Heart left ventricle (tissue), 16 donors: ENCODE measurements at regions of chr3 and their contacts with region 1.

Region 1: GRCh38 chr3:12719984-12720898 is 38.8 kb downstream of the TMEM40 start:
- DNase-seq: peak; percentile 70 to 82 (median 81)
- ATAC-seq: peak; percentile 92 to 98 (median 96)
- H3K4me3 ChIP-seq: peak overlapping the region in 10 of 12 donors; percentile 10 to 54 (median 40)
- H3K27ac ChIP-seq: peak overlapping the region in 6 of 12 donors; percentile 9 to 60 (median 32)
- H3K4me1 ChIP-seq: peaks cover 0 to 16% (median 4%) of the 10 kb centered on the region in 12 donors
- H3K27me3 ChIP-seq: no peaks in the 10 kb centered on the region
- CTCF ChIP-seq: peak; percentile 80 to 98 (median 90)
- POLR2A ChIP-seq: no peak

Region 2: DNA sequence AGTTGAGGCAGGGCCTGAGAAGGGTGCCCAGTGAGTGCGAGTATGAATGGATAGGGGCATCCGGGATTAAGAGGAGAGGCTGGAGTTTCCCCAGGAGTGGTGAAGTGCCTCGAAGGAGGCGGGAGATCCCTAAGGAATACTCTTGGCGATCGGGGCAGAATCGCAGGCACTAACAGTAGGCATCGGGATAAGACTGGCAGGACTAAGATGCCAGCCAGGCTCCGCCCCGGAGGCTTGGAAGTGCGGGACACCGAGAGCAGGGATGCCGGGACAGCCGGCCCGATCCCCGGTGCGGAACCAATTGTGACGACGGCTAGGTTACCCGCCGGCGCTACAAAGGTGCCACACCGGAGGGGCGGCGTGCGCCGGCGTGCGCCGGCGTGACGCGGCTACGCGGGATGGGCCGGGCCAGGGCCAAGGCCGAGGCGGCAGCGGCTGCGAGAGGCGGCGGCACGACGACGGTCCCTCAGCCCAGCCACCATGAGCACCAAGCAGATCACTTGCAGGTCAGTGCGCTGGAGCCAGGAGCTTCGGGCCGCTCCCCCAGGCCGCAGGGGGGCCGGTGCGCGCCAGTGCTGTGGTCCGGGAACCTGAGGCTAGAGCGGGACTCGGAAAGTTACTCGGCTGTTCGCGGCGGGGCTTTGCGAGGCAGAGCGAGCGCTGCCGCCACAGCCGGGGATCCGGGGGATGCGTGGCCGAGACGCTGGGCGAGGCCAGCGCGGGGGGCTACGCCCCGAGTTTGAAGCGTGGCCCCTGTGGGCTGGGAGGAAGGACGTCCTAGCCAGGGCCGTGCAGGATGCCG is 163.4 kb before region 1 on chr3 and contains the start of gene MKRN2:
- intact Hi-C with region 1: loop called in 1 of 10 experiments (anchors 10 kb)
- DNase-seq: peak; percentile 88 to 95 (median 89)
- ATAC-seq: peak; percentile 74 to 98 (median 94)
- H3K4me3 ChIP-seq: peak within 1 kb of the TSS; percentile 66 to 96 (median 88)
- H3K27ac ChIP-seq: peak within 1 kb of the TSS; percentile 91 to 99 (median 96)
- H3K4me1 ChIP-seq: peaks cover 0 to 61% (median 46%) of the 10 kb centered on the region in 12 donors
- H3K27me3 ChIP-seq: peaks cover 0 to 17% (median 0%) of the 10 kb centered on the region in 9 donors
- CTCF ChIP-seq: peak in 2 of 12 donors; percentile 5 to 9
- POLR2A ChIP-seq: peak; percentile 87 to 98
- total RNA-seq, gene MKRN2: 27.6 to 42.2 (median 32.9) TPM

Region 3: GRCh38 chr3:12588039-12589009 is 131.9 kb before region 1 on chr3:
- intact Hi-C with region 1: loop called in 1 of 10 experiments (anchors 10 kb)
- DNase-seq: no peak
- ATAC-seq: no peak
- H3K4me3 ChIP-seq: no peak overlapping the region
- H3K27ac ChIP-seq: peak overlapping the region in 6 of 12 donors; percentile 13 to 58 (median 33)
- H3K4me1 ChIP-seq: peaks cover 0 to 46% (median 10%) of the 10 kb centered on the region in 12 donors
- H3K27me3 ChIP-seq: no peaks in the 10 kb centered on the region
- CTCF ChIP-seq: no peak
- POLR2A ChIP-seq: no peak

Region 4: GRCh38 chr3:12601072-12601471 is 119.2 kb before region 1 on chr3:
- intact Hi-C with region 1: loop called in 2 of 10 experiments (anchors 5 to 10 kb)
- DNase-seq: no peak
- ATAC-seq: no peak
- H3K4me3 ChIP-seq: no peak overlapping the region
- H3K27ac ChIP-seq: peak overlapping the region in 1 of 12 donors; percentile 20
- H3K4me1 ChIP-seq: peaks cover 0 to 8% (median 0%) of the 10 kb centered on the region in 12 donors
- H3K27me3 ChIP-seq: no peaks in the 10 kb centered on the region
- CTCF ChIP-seq: peak in 6 of 12 donors; percentile 11 to 41 (median 19)
- POLR2A ChIP-seq: no peak

Region 5: GRCh38 chr3:12759693-12760601 is 39.7 kb after region 1 on chr3:
- intact Hi-C with region 1: loop called in 1 of 10 experiments (anchors 10 kb)
- DNase-seq: no peak
- ATAC-seq: no peak
- H3K4me3 ChIP-seq: no peak overlapping the region
- H3K27ac ChIP-seq: no peak overlapping the region
- H3K4me1 ChIP-seq: peaks cover 0 to 19% (median 12%) of the 10 kb centered on the region in 12 donors
- H3K27me3 ChIP-seq: no peaks in the 10 kb centered on the region
- CTCF ChIP-seq: no peak
- POLR2A ChIP-seq: no peak